Adrenal gland (tissue), 19 donors: ENCODE measurements at regions of chr16 and their contacts with region 1.

Region 1: DNA sequence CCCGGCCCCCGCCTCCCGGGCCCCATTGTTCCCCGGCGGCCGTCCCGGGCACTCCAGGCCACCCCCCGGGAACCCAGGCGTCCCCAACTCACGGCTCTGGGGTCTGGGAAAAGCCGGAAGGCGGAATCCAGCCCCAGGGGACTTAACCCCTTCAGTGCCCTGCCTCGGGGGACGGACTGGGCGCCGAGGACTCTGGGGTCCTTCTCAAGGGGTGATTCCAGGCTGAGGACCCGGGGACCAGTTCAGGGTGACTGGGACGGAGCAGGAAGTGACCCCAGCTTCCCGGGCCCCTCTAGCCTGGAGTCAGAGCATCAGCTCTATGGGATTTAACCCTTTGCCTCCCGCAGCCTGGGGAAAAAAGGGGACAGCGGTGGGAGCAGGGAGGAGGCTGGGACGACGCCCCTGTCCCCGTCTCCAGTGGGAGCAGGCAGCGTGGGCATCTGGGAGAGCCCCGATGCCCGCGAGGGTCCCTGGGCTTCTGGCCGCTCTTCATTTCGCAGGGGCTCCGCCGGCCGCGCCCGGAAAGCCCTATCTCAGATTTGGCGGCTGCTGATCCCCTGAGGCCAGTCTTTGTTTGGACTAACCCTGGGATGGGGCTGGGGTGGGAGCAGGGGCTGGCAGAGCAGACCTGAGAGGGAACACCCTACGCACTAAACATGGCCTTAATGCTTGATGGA is at the start of gene ZNF629:
- DNase-seq: peak; percentile 76 to 85 (median 82)
- H3K4me3 ChIP-seq: peak within 1 kb of the TSS; percentile 56 to 99 (median 86)
- H3K27ac ChIP-seq: peak within 1 kb of the TSS in 4 of 5 donors; percentile 80 to 91 (median 85)
- H3K4me1 ChIP-seq: peaks cover 11 to 15% of the 10 kb centered on the region in 2 donors
- H3K27me3 ChIP-seq: no peaks in the 10 kb centered on the region
- CTCF ChIP-seq: peak in 2 of 6 experiments; percentile 23 to 24
- POLR2A ChIP-seq: peak in 1 of 2 donors; percentile 31
- total RNA-seq, gene ZNF629: 16.6 to 27.0 (median 24.2) TPM

Region 2: DNA sequence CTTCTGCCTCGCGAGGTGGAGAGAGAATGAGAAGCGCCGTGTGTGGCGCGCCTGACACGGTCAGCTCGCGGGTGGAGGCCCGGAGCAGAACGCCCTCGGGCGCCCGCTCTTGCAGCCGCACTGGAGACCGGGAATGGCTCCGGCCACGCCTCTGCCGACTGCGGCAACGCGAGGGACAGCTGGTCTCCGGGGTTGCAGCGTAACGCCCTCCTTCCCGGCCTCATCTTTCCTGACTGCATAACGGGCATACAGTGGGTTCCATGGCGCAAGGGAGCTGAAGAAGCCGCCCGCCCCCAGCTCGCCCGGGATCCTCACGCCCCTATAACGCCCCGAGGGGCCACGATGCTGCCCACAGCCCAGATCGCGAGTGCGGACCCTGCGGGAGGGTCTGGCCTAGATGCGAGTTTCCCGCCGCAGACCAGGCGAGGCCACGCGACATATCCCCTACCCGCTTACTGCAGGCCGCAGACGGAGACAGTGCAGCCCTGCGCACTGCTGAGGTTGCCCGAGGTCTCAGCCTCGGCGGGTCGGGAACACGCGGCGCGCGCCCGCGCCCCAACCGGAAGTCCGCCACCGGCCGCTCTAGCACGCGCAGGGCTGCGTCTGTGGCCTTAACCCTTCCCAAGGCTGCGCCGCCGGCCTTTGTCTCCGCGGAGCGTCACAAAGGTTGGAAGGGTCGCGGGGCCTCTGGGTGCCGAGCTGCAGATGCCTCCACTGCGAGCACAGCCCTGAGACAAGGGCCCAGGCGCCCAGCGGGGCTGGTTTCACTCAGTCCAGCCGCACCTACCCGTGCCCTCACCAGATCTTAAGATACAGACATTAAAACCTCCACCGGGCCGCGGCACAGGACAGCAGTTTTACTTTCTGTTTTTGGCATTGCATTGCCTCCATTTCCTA is 88.0 kb after region 1 on chr16:
- intact Hi-C with region 1: loop called in 1 of 2 experiments (anchors 10 kb)
- DNase-seq: peak; percentile 91 to 96 (median 92)
- H3K4me3 ChIP-seq: peak overlapping the region; percentile 47 to 92 (median 62)
- H3K27ac ChIP-seq: peak overlapping the region; percentile 85 to 96 (median 93)
- H3K4me1 ChIP-seq: peaks cover 16 to 19% of the 10 kb centered on the region in 2 donors
- H3K27me3 ChIP-seq: no peaks in the 10 kb centered on the region
- CTCF ChIP-seq: peak in 1 of 6 experiments; percentile 10
- POLR2A ChIP-seq: peak; percentile 66 to 90

Region 3: DNA sequence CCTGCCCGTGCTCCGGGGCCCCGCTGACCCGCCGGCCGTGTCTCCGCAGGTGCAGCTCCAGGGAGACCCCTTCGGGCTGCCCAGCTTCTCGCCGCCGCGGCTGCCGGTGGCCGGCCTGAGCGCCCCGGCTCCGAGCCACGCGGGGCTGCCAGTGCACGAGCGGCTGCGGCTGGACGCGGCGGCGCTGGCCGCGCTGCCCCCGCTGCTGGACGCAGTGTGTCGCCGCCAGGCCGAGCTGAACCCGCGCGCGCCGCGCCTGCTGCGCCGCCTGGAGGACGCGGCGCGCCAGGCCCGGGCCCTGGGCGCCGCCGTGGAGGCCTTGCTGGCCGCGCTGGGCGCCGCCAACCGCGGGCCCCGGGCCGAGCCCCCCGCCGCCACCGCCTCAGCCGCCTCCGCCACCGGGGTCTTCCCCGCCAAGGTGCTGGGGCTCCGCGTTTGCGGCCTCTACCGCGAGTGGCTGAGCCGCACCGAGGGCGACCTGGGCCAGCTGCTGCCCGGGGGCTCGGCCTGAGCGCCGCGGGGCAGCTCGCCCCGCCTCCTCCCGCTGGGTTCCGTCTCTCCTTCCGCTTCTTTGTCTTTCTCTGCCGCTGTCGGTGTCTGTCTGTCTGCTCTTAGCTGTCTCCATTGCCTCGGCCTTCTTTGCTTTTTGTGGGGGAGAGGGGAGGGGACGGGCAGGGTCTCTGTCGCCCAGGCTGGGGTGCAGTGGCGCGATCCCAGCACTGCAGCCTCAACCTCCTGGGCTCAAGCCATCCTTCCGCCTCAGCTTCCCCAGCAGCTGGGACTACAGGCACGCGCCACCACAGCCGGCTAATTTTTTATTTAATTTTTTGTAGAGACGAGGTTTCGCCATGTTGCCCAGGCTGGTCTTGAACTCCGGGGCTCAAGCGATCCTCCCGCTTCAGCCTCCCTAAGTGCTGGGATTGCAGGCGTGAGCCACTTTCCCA is 115.2 kb after region 1 on chr16:
- intact Hi-C with region 1: no loop called
- DNase-seq: peak; percentile 63 to 78 (median 69)
- H3K4me3 ChIP-seq: peak overlapping the region in 2 of 4 donors; percentile 40 to 62
- H3K27ac ChIP-seq: peak overlapping the region; percentile 51 to 96 (median 84)
- H3K4me1 ChIP-seq: peaks cover 6 to 9% of the 10 kb centered on the region in 2 donors
- H3K27me3 ChIP-seq: no peaks in the 10 kb centered on the region
- CTCF ChIP-seq: peak in 5 of 6 experiments; percentile 24 to 82 (median 39)
- POLR2A ChIP-seq: peak; percentile 29 to 45

Region 4: GRCh38 chr16:31022544-31023251 is 235.6 kb after region 1 on chr16:
- intact Hi-C with region 1: no loop called
- DNase-seq: no peak
- H3K4me3 ChIP-seq: no peak overlapping the region
- H3K27ac ChIP-seq: no peak overlapping the region
- H3K4me1 ChIP-seq: peaks cover 7% of the 10 kb centered on the region in 2 donors
- H3K27me3 ChIP-seq: no peaks in the 10 kb centered on the region
- CTCF ChIP-seq: no peak
- POLR2A ChIP-seq: no peak